Lower leg skin (tissue), 4 donors: ENCODE measurements at regions of chr1 and their contacts with region 1.

Region 1: DNA sequence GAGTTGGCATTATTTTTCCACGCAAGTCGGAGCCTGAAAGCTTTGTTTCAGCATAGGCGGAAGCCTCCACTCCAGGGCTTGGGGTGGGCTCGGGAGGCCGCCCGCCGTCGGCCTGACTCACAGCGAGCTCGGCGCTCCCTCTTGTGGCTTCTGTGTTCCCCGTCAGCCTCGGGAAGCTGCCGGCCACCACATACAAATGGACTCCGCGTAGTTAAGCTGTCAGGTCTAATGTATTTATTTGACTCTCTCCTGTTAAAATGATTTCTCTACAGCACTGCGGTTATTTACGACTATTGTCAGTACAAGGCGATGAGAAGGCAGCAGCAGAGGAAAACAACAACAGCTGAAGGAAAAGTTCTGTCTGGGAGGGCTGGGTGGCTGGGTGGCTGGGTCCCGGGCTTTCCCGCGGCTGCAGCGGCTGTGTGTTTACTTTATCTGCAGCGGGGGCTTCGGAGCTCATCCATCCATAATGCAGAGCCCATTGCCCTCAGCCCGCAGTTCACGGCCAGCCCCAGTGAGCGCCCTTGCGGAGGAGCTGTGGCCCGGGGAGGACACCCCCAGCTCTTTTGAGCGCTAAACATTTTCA is 375.7 kb upstream of the CAMK1G start:
- DNase-seq: peak; percentile 23 to 89
- H3K4me3 ChIP-seq: no peak overlapping the region
- CTCF ChIP-seq: no peak
- POLR2A ChIP-seq: no peak

Region 2: GRCh38 chr1:207811920-207812720 is 1395.7 kb before region 1 on chr1:
- intact Hi-C with region 1: no loop called
- DNase-seq: peak in 1 of 2 donors; percentile 59
- H3K4me3 ChIP-seq: no peak overlapping the region
- CTCF ChIP-seq: no peak
- POLR2A ChIP-seq: no peak

Region 3: DNA sequence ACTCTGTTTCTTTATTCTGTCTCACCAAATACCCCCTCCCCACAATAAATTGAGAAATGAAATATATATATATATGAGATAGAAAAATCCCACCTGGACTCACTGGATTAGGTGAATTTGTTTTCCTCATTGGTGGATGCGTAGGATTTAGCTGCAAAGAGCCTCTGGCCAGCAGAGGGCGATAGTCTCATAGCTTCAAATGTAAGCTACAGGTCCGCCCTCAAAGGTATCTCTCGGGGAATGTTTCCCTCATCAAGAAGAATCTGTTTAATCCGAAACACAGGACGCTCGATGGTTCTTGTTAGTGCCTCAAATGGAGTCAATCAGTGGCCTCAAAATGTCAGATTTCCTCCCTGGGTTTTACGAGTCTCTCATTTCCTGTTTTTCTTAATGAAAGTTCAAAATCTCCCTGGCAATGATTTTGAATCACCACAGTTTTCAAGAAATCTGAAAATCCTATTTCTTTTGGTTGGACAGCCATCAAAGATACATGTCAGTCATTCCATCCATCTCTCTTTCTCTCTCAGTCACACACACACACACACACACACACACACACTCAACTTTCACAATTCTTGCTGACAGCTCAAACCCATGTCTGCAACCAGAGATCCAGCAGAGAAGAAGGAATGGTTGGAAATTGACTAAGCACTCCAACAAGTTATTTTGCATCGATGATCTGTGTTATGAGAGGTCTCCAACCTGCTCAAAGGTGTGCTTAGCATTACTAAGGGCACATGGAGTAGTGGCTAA is 361.8 kb after region 1 on chr1:
- intact Hi-C with region 1: loop called (anchors 5 kb)
- DNase-seq: peak; percentile 82 to 95
- H3K4me3 ChIP-seq: no peak overlapping the region
- CTCF ChIP-seq: no peak
- POLR2A ChIP-seq: no peak